Left cardiac atrium (tissue), 4 donors: ENCODE measurements at regions of chrX and their contacts with region 1.

Region 1: GRCh38 chrX:1442016-1442665 is 10.6 kb downstream of the ASMTL start:
- DNase-seq: peak; percentile 18
- ATAC-seq: no peak

Region 2: DNA sequence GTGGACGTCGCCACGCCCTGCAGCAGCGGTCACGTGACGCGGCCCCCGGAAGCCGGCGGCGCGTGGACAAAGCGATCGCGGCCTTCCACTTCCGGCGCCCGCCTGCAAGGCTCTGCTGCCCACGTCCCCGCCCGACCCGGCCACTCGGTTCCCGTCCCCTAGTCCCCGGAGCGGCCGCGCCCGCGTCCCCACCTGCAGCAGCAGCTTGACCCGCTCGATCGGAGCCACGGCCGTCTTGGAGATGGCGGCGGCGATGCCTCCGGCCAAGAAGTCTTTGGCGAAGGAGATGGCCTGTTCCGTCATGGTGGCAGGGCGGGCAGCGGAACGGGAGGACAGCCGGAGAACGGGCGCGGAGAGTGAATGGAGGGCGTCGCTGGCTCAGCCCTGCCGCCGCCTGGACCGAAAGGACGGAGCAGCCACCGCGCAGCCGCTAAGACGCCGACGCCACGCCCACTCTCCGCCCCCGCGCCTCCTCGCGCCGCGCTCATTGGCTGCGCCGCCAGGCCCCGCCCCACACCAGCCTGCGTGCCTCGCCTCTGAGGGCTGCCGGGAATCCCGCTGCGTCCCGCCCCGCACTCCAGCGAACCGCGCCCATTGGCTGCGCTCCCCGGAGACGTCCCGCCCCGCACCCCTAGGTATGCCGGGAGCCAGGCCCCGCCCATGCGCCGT is 50.3 kb before region 1 on chrX and contains the start of gene SLC25A6:
- intact Hi-C with region 1: loop called in 1 of 2 experiments (anchors 10 kb)
- DNase-seq: peak; percentile 99
- ATAC-seq: peak; percentile 96 to 97
- total RNA-seq, gene SLC25A6: 171 to 206 TPM